ENCODE measurements at regions of chr14 and their contacts with region 1.

Region 1: GRCh38 chr14:104865644-104866441 is 775 bp downstream of the CEP170B start:
- DNase-seq: peak; percentile 82
- H3K4me3 Mint-ChIP-seq: peak overlapping the region; percentile 75
- H3K27ac Mint-ChIP-seq: no peak overlapping the region
- H3K4me1 Mint-ChIP-seq: no peaks in the 10 kb centered on the region
- H3K27me3 Mint-ChIP-seq: peaks cover 11% of the 10 kb centered on the region

Region 2: GRCh38 chr14:104768437-104769323 is 97.2 kb before region 1 on chr14:
- intact Hi-C with region 1: loop called (anchors 2 kb)
- DNase-seq: peak; percentile 98
- H3K4me3 Mint-ChIP-seq: no peak overlapping the region
- H3K27ac Mint-ChIP-seq: no peak overlapping the region
- H3K4me1 Mint-ChIP-seq: peaks cover 3% of the 10 kb centered on the region
- H3K27me3 Mint-ChIP-seq: no peaks in the 10 kb centered on the region

Region 3: GRCh38 chr14:104843442-104844305 is 22.2 kb before region 1 on chr14:
- intact Hi-C with region 1: loop called (anchors 2 kb)
- DNase-seq: no peak
- H3K4me3 Mint-ChIP-seq: no peak overlapping the region
- H3K27ac Mint-ChIP-seq: no peak overlapping the region
- H3K4me1 Mint-ChIP-seq: no peaks in the 10 kb centered on the region
- H3K27me3 Mint-ChIP-seq: peaks cover 55% of the 10 kb centered on the region

Measured in activated CD4-positive, alpha-beta T cell treated with anti-CD3 and anti-CD28 coated beads, Interleukin-2, amount 10 ng/mL, durations not matched to agents 24 days and 14 days (primary cell).